ENCODE measurements at regions of chr4 and their contacts with region 1.

Region 1: DNA sequence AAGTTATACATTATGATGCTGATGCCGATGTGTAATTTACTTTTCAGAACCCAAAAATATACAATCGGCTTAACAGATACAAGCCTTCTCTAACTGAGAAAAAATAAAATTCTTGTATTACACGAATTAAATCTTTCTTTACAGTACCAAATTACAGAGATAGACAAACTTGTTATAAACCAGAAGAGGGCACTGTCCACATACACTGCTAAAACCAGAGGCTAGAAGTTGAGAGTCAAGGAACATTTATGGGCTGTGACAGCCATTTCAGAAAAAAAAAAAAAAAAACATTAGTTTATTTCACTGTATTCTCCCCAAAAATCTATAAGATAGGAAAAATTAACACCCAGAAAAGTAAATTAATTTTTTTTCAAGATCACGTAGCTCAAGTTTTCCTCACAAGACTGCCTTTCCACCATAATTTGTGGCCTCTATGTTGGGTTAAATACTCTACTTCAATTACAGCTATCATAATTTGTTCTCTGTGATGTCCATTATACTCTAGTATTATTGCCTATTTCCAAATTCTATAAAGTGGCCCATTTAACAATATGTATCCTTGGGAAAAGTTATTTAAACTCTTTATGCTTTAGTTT is 12.0 kb downstream of the EREG start:
- DNase-seq: peak in 1 of 3 donors; percentile 24
- ATAC-seq: peak; percentile 58
- H3K4me3 ChIP-seq: no peak overlapping the region
- H3K4me1 ChIP-seq: peaks cover 8% of the 10 kb centered on the region
- CTCF ChIP-seq: peak; percentile 13

Region 2: GRCh38 chr4:74531963-74532794 is 155.2 kb after region 1 on chr4:
- intact Hi-C with region 1: loop called in 1 of 2 experiments (anchors 5 kb)
- DNase-seq: peak in 1 of 3 donors; percentile 33
- ATAC-seq: peak; percentile 62
- H3K4me3 ChIP-seq: no peak overlapping the region
- H3K4me1 ChIP-seq: peaks cover 13% of the 10 kb centered on the region
- CTCF ChIP-seq: peak; percentile 18

Measured in mucosa of descending colon (tissue), 3 donors.